A673 (cell line): ENCODE measurements at regions of chr17 and their contacts with region 1.

Region 1: DNA sequence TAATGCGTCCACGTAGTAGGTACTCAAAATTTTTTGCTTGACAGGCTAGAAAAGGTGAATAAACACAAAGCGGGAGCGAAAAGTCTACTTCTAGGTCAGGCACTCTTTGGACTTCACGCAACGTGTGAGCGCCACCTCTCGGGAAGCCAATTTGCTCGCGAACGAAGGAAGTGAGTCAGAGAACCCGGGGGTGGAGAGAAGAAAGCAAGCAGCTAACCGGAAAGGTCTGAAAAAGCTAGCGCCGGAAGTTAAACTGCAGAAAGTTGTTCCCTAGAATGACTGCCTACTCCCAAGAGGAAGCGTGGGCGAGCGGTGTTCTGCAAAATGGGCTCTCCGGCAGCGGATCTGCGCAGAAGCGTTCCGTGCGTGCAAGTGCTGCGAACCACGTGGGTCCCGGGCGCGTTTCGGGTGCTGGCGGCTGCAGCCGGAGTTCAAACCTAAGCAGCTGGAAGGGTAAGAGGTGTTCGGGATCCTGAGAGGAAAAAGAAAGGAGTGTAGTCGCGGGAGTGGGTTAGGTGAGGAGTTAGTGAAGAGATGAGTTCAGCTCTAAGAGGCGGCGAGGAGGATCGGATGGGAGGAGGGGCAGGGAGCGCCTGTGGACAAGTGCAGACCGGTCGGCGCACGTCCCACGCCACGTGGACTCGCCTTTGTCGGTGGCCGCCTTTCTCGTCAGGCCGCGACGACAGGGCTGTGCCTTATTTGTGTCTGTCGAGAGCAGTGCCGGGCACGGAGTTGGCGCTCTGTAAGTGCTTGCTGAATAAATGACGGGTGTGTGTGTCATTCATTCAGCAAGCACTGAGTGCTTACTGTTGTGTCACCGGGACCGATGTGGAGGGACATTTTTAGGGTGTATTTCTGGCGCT is at the start of gene NME1:
- DNase-seq: peak; percentile 100
- H3K4me3 ChIP-seq: peak within 1 kb of the TSS; percentile 62
- H3K27ac ChIP-seq: peak within 1 kb of the TSS; percentile 84
- H3K4me1 ChIP-seq: peaks cover 16% of the 10 kb centered on the region
- H3K27me3 ChIP-seq: no peaks in the 10 kb centered on the region
- CTCF ChIP-seq: peak; percentile 92
- total RNA-seq, gene NME1: 445 and 498 TPM in 2 replicates

Region 2: DNA sequence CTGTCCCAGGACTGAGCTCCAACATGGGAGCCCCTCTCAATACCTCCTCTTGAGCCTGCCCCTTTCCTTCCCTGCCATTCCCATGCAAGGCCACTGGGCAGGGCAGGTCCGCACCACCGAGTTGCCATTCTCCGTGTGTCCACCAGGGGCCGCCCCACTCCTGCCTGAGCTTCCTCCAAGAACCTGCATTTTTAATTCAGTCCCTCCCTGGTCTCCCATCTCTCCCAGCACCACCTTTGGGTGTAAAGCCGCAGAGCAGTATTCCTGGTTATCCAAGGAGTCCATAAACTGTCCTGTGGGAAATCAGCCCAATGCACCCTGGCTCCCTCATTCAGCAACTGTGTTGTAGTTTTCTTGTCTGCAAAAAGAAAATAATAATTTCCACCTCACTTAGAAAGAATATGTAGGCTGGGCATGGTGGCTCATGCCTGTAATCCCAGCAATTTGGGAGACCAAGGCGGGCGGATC is 370.2 kb before region 1 on chr17:
- CTCF ChIA-PET with region 1: no interaction called
- POLR2A ChIA-PET with region 1: no interaction called
- intact Hi-C with region 1: loop called (anchors 10 kb)
- DNase-seq: peak; percentile 90
- H3K4me3 ChIP-seq: no peak overlapping the region
- H3K27ac ChIP-seq: no peak overlapping the region
- H3K4me1 ChIP-seq: no peaks in the 10 kb centered on the region
- H3K27me3 ChIP-seq: no peaks in the 10 kb centered on the region
- CTCF ChIP-seq: peak; percentile 99

Region 3: GRCh38 chr17:50865984-50866774 is 287.3 kb before region 1 on chr17 and contains the start of gene TOB1:
- CTCF ChIA-PET with region 1: no interaction called
- POLR2A ChIA-PET with region 1: no interaction called
- intact Hi-C with region 1: loop called (anchors 5 kb)
- DNase-seq: peak; percentile 96
- H3K4me3 ChIP-seq: peak within 1 kb of the TSS; percentile 58
- H3K27ac ChIP-seq: peak within 1 kb of the TSS; percentile 95
- H3K4me1 ChIP-seq: peaks cover 6% of the 10 kb centered on the region
- H3K27me3 ChIP-seq: no peaks in the 10 kb centered on the region
- CTCF ChIP-seq: no peak
- total RNA-seq, gene TOB1: 19.3 and 24.4 TPM in 2 replicates

Region 4: DNA sequence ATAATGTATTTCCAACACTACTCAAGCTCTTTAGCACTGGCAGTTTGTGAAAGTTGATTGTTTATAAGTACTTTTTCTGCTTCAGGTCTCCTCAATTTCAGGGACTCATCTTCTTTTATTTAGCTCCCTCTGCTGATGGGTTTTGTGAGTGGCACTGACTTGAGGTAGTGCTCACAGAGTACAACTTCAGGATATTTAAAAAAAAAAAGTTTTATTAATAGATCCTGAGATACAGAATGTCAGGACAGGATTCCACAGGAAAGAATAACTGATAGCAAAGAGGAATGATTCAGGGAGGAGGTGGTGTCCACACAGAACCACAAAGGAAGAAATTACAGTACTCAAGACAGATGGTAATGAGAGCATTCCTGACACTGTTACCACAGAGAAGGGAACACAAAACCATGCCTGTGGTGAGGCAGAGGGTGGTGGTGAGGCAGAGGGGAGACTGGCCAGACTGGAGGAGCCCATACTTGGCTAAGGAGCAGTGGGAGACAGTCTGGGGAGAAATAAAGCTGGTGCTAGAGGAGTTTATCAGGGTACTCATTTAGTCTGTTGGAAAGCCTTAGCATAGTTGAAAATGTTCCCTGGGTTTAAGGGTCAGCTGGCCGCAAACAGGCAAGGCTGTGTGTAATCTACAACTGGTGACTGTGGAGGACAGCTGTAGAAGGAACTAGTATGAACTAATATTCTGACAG is 96.5 kb before region 1 on chr17:
- CTCF ChIA-PET with region 1: interaction called, 10 read pairs
- POLR2A ChIA-PET with region 1: no interaction called
- intact Hi-C with region 1: loop called (anchors 5 kb)
- DNase-seq: peak; percentile 81
- H3K4me3 ChIP-seq: no peak overlapping the region
- H3K27ac ChIP-seq: peak overlapping the region; percentile 30
- H3K4me1 ChIP-seq: no peaks in the 10 kb centered on the region
- H3K27me3 ChIP-seq: no peaks in the 10 kb centered on the region
- CTCF ChIP-seq: peak; percentile 80

Region 5: DNA sequence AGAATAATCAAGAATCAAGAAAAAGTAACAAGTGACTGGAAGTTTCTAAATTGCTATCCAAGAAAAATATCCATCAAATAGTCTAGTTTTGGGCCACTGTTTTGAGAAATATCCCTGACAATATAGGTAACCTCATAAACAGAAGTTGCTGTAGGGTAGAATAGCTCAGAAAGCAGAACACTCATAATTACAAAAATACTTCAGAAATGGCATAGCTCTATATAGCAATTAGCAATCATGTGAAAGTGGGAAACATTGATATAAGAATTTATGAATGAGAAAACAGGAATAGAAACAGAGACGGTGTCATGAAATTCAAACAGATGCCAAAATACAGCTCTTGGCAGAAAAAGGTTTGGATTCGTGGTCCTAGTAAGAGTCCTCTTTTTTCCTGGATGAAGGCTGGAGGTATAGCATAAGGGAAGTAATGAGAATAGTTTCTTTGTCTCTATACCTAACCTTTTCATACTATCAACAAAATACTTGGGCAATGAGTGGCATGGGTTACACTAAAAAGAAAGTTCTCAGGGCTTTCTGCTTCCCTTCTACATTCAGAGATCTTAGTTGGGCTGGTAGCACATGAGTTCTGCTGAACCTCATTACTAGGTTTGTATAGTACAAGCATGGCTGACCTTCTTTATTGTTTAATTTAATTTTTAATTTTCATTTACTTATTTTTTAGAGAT is 66.2 kb before region 1 on chr17:
- CTCF ChIA-PET with region 1: no interaction called
- POLR2A ChIA-PET with region 1: no interaction called
- intact Hi-C with region 1: no loop called
- DNase-seq: no peak
- H3K4me3 ChIP-seq: no peak overlapping the region
- H3K27ac ChIP-seq: no peak overlapping the region
- H3K4me1 ChIP-seq: peaks cover 19% of the 10 kb centered on the region
- H3K27me3 ChIP-seq: no peaks in the 10 kb centered on the region
- CTCF ChIP-seq: no peak

Region 6: GRCh38 chr17:51097708-51098446 is 55.6 kb before region 1 on chr17:
- CTCF ChIA-PET with region 1: no interaction called
- POLR2A ChIA-PET with region 1: no interaction called
- intact Hi-C with region 1: no loop called
- DNase-seq: no peak
- H3K4me3 ChIP-seq: no peak overlapping the region
- H3K27ac ChIP-seq: no peak overlapping the region
- H3K4me1 ChIP-seq: no peaks in the 10 kb centered on the region
- H3K27me3 ChIP-seq: no peaks in the 10 kb centered on the region
- CTCF ChIP-seq: no peak

Region 7: GRCh38 chr17:51992864-51993416 is 839.5 kb after region 1 on chr17:
- CTCF ChIA-PET with region 1: no interaction called
- POLR2A ChIA-PET with region 1: no interaction called
- intact Hi-C with region 1: no loop called
- DNase-seq: no peak
- H3K4me3 ChIP-seq: no peak overlapping the region
- H3K27ac ChIP-seq: no peak overlapping the region
- H3K4me1 ChIP-seq: no peaks in the 10 kb centered on the region
- H3K27me3 ChIP-seq: no peaks in the 10 kb centered on the region
- CTCF ChIP-seq: no peak